Left cardiac atrium (tissue), 4 donors: ENCODE measurements at regions of chr11 and their contacts with region 1.

Region 1: GRCh38 chr11:110069158-110069737 is 23.9 kb upstream of the ZC3H12C start:
- DNase-seq: peak; percentile 80
- ATAC-seq: peak; percentile 90 to 92

Region 2: GRCh38 chr11:110000031-110000502 is 69.2 kb before region 1 on chr11:
- intact Hi-C with region 1: loop called in 1 of 2 experiments (anchors 10 kb)
- DNase-seq: no peak
- ATAC-seq: peak; percentile 84 to 97

Region 3: DNA sequence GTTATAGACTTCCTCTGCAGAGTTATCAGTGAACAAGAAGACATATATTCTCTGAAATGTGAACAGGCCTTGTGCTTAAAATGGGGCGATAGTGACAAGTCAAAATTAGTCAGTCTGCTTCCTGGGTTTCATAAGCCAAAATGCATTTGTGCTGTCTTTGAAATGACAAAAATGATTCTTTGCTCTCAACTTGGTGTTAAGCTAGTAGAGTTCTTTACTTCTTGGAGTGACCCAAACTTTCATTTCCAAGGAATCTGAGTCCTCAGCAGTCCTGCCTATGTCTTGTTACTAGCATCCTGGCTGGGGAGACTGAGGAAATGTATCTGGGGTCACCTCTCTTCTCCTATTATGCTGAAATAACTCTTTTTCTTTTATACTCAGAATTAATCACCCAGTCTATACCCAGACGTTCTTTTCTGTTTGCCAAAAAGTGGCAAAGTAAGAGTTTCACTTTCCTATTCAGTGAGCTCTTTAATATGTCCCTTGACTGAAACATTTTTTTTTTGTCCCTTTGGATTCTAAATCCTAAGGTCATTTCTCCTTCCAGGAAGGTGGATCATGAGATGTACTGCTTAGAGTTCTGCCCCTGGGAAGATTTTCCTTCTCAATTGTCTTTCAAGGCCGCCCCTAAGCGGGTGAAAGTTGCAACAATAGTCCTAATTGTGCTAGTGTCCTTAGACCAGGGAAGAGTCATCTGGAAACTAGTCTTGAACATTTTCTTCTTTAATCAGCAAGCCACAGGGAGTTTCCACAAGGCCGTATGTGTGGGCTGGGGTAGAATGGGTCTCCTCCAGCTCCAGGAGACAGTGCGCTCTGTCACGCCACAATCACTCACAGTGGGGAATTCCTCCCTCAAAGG is 280.1 kb after region 1 on chr11:
- intact Hi-C with region 1: no loop called
- DNase-seq: no peak
- ATAC-seq: no peak